SK-N-SH (cell line): ENCODE measurements at regions of chr1 and their contacts with region 1.

Region 1: GRCh38 chr1:207035877-207036558 is 3.5 kb upstream of the C1orf116 start:
- DNase-seq: no peak
- H3K4me3 ChIP-seq: no peak overlapping the region
- H3K27ac ChIP-seq: no peak overlapping the region
- H3K4me1 ChIP-seq: no peaks in the 10 kb centered on the region; a peak in 2 of 4 replicates
- H3K27me3 ChIP-seq: no peaks in the 10 kb centered on the region
- CTCF ChIP-seq: no peak
- EP300 ChIP-seq: no peak
- RAD21 ChIP-seq: no peak

Region 2: GRCh38 chr1:207050768-207051614 is 15.0 kb after region 1 on chr1 and contains the start of gene YOD1:
- CTCF ChIA-PET with region 1: interaction called, 14 read pairs
- POLR2A ChIA-PET with region 1: no interaction called
- DNase-seq: peak; percentile 91
- H3K4me3 ChIP-seq: peak within 1 kb of the TSS; percentile 94 to 97
- H3K27ac ChIP-seq: peak within 1 kb of the TSS; percentile 77 to 89
- H3K4me1 ChIP-seq: peaks cover 23 to 26% of the 10 kb centered on the region in 2 experiments
- H3K27me3 ChIP-seq: no peaks in the 10 kb centered on the region
- CTCF ChIP-seq: no peak
- EP300 ChIP-seq: no peak
- RAD21 ChIP-seq: no peak
- polyA plus RNA-seq, gene YOD1: 0.79 and 0.91 TPM in 2 replicates